ENCODE measurements at regions of chr11 and their contacts with region 1.

Region 1: DNA sequence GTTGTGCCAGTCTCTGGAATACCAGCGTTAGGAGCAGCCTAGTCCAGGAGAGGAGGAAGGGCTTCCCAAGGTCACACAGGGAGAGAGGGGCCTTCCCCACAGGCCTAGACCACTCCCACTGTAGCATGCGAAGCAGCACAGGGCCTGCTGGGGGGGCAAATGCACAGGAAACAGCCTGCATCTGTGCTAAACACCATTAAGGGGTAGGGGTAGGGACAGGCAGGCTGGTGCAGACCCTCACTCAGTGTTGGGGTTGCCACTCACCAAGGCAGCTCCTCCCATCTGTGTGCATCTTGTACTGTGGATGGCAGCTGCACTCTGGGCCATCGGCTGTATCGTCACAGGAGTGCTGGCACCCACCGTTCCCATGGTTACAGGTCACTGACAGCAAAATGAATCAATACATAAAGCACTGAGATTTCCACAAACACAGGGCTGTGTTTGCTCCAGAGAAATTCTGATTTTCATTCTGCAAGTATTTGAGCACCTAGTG is 24.9 kb downstream of the SCUBE2 start:
- DNase-seq: peak; percentile 17
- ATAC-seq: peak; percentile 84
- H3K4me3 ChIP-seq: peak overlapping the region in 1 of 3 experiments; percentile 15; a peak in 1 of 6 replicates
- H3K27ac ChIP-seq: no peak overlapping the region
- H3K4me1 ChIP-seq: peaks cover 14% of the 10 kb centered on the region
- H3K27me3 ChIP-seq: peaks cover 2 to 39% of the 10 kb centered on the region in 2 experiments; a peak in 3 of 5 replicates
- CTCF ChIP-seq: no peak
- EP300 ChIP-seq: no peak
- POLR2A ChIP-seq: no peak
- RAD21 ChIP-seq: no peak

Region 2: GRCh38 chr11:9039194-9039593 is 27.3 kb before region 1 on chr11:
- CTCF ChIA-PET with region 1: no interaction called
- POLR2A ChIA-PET with region 1: no interaction called
- in situ Hi-C with region 1: no loop called
- intact Hi-C with region 1: loop called (anchors 1 kb)
- DNase-seq: no peak
- ATAC-seq: no peak
- H3K4me3 ChIP-seq: no peak overlapping the region
- H3K27ac ChIP-seq: no peak overlapping the region
- H3K4me1 ChIP-seq: no peaks in the 10 kb centered on the region
- H3K27me3 ChIP-seq: peaks cover 4 to 30% of the 10 kb centered on the region in 2 experiments; a peak in 4 of 5 replicates
- CTCF ChIP-seq: no peak
- EP300 ChIP-seq: no peak
- POLR2A ChIP-seq: no peak
- RAD21 ChIP-seq: no peak

Measured in HepG2 (cell line).